ENCODE measurements at regions of chr1 and their contacts with region 1.

Region 1: GRCh38 chr1:26787706-26788514 is at the start of gene PIGV:
- DNase-seq: peak; percentile 93
- ATAC-seq: peak; percentile 86
- total RNA-seq, gene PIGV: 10.6 TPM

Region 2: GRCh38 chr1:26608895-26609294 is 179.0 kb before region 1 on chr1:
- intact Hi-C with region 1: loop called (anchors 5 kb)
- DNase-seq: no peak
- ATAC-seq: no peak

Region 3: DNA sequence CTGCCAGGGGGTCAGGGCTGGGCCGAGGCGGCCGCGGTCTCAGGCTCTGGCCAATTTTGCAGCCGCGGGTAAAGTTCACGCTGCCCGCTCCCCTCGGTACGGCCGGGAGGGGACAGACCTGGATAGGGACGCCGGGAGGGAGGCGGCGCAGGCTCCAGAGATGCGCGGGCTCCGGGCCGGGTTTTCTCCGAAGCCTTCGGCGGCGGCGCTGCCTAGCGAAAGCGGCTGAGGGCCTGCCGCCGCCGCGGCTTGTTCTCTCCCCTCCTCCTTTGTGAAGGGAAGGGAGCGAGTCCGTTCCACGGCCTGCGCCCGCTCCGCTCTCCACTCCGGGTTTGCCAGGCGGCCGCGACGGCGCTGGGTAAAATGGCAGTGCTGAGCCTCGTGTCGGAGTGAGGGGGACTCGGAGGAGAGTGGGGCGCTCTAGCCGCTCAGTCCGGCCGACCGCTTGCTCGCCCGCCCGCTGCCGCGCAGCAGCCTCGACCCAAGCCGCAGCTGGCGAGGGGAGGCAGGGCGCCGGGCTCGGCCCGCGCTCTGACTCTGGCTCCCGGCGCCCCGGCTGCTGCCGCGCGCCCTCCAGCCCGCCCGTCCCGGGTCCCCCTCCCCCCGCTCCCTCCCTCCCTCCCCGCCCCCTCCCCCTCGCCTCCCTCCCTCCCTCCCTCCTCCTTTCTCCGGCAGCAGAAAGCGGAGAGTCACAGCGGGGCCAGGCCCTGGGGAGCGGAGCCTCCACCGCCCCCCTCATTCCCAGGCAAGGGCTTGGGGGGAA is 92.4 kb before region 1 on chr1 and contains the start of gene ARID1A:
- intact Hi-C with region 1: loop called (anchors 1 kb)
- DNase-seq: peak; percentile 97
- ATAC-seq: peak; percentile 75
- total RNA-seq, gene ARID1A: 83.8 TPM